HEK293 (cell line): ENCODE measurements at regions of chr2 and their contacts with region 1.

Region 1: GRCh38 chr2:231181860-231182512 is 16.4 kb upstream of the ARMC9 start:
- H3K4me3 ChIP-seq: no peak overlapping the region
- H3K27ac ChIP-seq: no peak overlapping the region; the same call in 1 of the 2 replicates
- H3K4me1 ChIP-seq: no peaks in the 10 kb centered on the region
- CTCF ChIP-seq: no peak

Region 2: GRCh38 chr2:231191896-231192872 is 10.2 kb after region 1 on chr2:
- CTCF ChIA-PET with region 1: interaction called, 11 read pairs
- POLR2A ChIA-PET with region 1: no interaction called
- H3K4me3 ChIP-seq: no peak overlapping the region
- H3K27ac ChIP-seq: no peak overlapping the region
- H3K4me1 ChIP-seq: no peaks in the 10 kb centered on the region
- CTCF ChIP-seq: peak; percentile 63